Activated CD4-positive, alpha-beta T cell treated with anti-CD3 and anti-CD28 coated beads, Interleukin-2, amount 10 ng/mL, durations not matched to agents 24 days and 14 days (primary cell): ENCODE measurements at regions of chr13 and their contacts with region 1.

Region 1: GRCh38 chr13:46553886-46554858 is 1.2 kb downstream of the LRCH1 start:
- DNase-seq: peak; percentile 91
- H3K4me3 Mint-ChIP-seq: peak overlapping the region; percentile 97
- H3K27ac Mint-ChIP-seq: peak overlapping the region; percentile 90
- H3K4me1 Mint-ChIP-seq: peaks cover 45% of the 10 kb centered on the region
- H3K27me3 Mint-ChIP-seq: peaks cover 6% of the 10 kb centered on the region

Region 2: DNA sequence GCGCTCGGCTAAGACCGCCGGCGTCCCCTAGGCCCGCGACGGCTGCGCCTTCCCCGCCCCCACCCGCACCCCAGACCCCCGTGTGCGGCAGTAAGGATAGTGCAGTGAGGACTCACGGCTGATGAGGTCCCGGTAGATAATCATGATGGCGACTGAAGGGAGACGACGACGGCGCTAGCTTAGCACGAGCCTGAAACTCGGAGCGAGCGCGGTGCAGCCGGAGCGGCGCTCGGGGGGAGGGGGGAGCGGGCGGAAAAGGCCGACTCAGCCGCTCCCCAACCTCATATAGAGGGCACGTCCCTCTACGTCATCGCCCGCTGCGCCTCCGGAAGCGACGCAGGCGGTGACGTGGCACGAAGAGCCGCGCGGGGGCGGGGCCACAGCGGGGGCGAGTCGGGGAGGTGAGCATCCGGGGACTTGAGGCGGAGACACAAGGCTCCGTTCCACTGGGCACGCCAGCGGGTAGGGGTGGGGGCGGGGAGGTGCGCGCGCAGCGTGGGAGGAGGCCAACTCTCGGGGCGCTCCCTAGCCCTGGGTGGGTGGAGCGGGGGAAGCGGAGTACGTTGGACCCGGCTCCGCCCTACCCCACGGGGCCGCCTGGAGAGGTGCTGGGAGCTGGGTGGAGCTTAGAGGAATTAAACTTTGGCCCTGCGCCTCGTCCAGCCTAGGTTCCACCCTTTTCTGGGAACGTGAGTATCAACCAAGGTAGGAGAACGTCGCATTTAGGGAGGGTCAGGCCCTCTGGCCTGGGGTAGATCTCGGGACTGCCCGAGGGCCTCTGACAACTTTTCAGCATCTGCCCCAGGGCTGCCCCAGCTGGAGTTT is 1213.0 kb before region 1 on chr13 and contains the start of gene TPT1:
- intact Hi-C with region 1: loop called (anchors 10 kb)
- DNase-seq: peak; percentile 100
- H3K4me3 Mint-ChIP-seq: peak within 1 kb of the TSS; percentile 99
- H3K27ac Mint-ChIP-seq: peak within 1 kb of the TSS; percentile 99
- H3K4me1 Mint-ChIP-seq: peaks cover 45% of the 10 kb centered on the region
- H3K27me3 Mint-ChIP-seq: no peaks in the 10 kb centered on the region
- total RNA-seq, gene TPT1: 2,188 and 2,224 TPM in 2 replicates

Region 3: GRCh38 chr13:46184277-46184699 is 369.9 kb before region 1 on chr13:
- intact Hi-C with region 1: loop called (anchors 5 kb)
- DNase-seq: peak; percentile 92
- H3K4me3 Mint-ChIP-seq: peak overlapping the region; percentile 94
- H3K27ac Mint-ChIP-seq: peak overlapping the region; percentile 98
- H3K4me1 Mint-ChIP-seq: peaks cover 43% of the 10 kb centered on the region
- H3K27me3 Mint-ChIP-seq: peaks cover 1% of the 10 kb centered on the region

Region 4: GRCh38 chr13:46492946-46493345 is 61.2 kb before region 1 on chr13:
- intact Hi-C with region 1: loop called (anchors 5 kb)
- DNase-seq: peak; percentile 71
- H3K4me3 Mint-ChIP-seq: no peak overlapping the region
- H3K27ac Mint-ChIP-seq: no peak overlapping the region
- H3K4me1 Mint-ChIP-seq: peaks cover 3% of the 10 kb centered on the region
- H3K27me3 Mint-ChIP-seq: no peaks in the 10 kb centered on the region

Region 5: DNA sequence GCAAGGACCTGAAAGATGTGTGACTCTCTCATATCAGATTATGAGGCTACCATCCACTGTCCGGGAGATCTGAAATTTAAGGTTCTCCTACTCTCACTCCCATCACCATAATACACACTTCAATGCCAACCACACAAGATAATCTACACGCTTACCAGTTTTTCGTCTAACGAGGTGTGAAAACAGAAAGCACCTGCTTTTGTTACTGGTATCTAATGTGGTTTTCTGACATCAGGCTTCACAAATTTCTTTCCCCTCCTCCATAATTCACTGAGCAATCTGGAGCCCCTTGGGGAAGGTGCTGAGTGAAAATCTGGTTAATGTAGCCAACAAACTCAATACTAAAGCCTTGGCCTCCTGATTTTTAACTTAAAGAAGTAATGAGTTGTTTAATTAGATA is 11.3 kb before region 1 on chr13:
- intact Hi-C with region 1: no loop called
- DNase-seq: no peak
- H3K4me3 Mint-ChIP-seq: no peak overlapping the region
- H3K27ac Mint-ChIP-seq: no peak overlapping the region
- H3K4me1 Mint-ChIP-seq: peaks cover 9% of the 10 kb centered on the region
- H3K27me3 Mint-ChIP-seq: peaks cover 19% of the 10 kb centered on the region

Region 6: DNA sequence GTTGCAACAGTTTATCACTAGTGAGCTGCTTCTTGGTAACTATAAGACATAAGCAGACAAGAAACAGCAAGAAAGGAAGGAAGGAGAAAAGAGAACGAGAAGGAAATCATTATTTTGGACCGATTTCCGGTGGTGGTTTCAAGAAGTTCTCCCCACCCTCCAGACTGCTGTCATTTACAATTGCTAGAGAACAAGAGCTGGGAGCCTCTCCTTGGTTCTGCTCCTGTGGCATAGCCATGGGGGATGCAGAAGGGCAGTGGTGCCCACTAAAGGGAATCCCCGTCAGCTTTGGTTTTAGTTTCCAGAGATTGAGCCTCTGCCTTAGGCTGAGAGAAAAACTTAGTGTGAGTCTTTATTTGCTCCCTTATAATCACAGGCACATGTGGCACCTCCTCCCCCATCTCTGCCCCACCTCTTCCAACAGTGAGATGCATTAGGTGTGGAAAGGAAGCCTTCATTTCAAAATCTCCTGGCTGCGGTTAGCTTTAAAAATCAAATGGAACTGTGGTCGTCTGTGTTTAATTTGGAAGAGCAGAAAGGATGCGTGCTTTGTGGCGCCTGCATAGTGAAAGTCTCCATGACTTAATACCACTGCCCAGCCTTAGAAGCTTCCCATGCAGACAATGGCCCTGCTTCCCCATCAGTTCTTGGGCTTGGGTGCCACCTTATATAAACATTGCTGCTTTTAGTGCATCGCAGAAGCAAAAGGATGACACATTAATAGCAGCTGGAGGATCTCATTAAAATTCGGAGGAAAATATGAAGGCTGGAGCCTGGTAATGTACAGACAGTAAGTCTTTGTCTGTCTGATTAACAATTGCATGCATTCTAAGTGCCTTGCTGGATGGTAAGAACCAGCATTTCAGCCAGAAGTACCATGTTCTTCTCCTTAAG is 23.8 kb after region 1 on chr13:
- intact Hi-C with region 1: loop called (anchors 1 kb)
- DNase-seq: no peak
- H3K4me3 Mint-ChIP-seq: peak overlapping the region; percentile 45
- H3K27ac Mint-ChIP-seq: peak overlapping the region; percentile 65
- H3K4me1 Mint-ChIP-seq: peaks cover 46% of the 10 kb centered on the region
- H3K27me3 Mint-ChIP-seq: no peaks in the 10 kb centered on the region

Region 7: GRCh38 chr13:46668302-46668720 is 114.1 kb after region 1 on chr13:
- intact Hi-C with region 1: loop called (anchors 1 kb)
- DNase-seq: peak; percentile 77
- H3K4me3 Mint-ChIP-seq: peak overlapping the region; percentile 88
- H3K27ac Mint-ChIP-seq: peak overlapping the region; percentile 85
- H3K4me1 Mint-ChIP-seq: peaks cover 50% of the 10 kb centered on the region
- H3K27me3 Mint-ChIP-seq: no peaks in the 10 kb centered on the region

Region 8: GRCh38 chr13:46721054-46721453 is 166.9 kb after region 1 on chr13:
- intact Hi-C with region 1: loop called (anchors 1 kb)
- DNase-seq: peak; percentile 81
- H3K4me3 Mint-ChIP-seq: no peak overlapping the region
- H3K27ac Mint-ChIP-seq: no peak overlapping the region
- H3K4me1 Mint-ChIP-seq: peaks cover 7% of the 10 kb centered on the region
- H3K27me3 Mint-ChIP-seq: no peaks in the 10 kb centered on the region

Region 9: GRCh38 chr13:46775385-46776107 is 221.4 kb after region 1 on chr13:
- intact Hi-C with region 1: no loop called
- DNase-seq: no peak
- H3K4me3 Mint-ChIP-seq: no peak overlapping the region
- H3K27ac Mint-ChIP-seq: no peak overlapping the region
- H3K4me1 Mint-ChIP-seq: peaks cover 1% of the 10 kb centered on the region
- H3K27me3 Mint-ChIP-seq: no peaks in the 10 kb centered on the region

Region 10: DNA sequence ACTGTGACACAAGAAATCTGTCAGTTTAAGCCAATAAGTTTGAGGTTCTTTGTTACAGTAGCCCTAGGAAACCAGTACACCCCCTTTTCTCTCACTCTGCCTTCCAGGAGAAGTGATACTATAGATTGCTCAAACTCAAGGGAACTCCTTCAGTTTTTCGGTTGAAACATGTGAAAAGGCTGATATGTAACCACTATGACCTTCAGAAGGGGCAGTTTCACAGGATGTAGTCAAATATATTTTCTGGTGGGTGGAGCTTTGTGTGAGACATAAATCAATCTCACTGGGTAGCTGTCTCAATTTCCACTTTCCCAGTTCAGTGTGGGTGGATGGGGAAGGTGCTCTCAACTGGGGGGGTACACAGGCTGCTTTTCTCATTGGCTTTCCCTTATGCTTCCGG is 301.0 kb after region 1 on chr13:
- intact Hi-C with region 1: no loop called
- DNase-seq: no peak
- H3K4me3 Mint-ChIP-seq: no peak overlapping the region
- H3K27ac Mint-ChIP-seq: no peak overlapping the region
- H3K4me1 Mint-ChIP-seq: no peaks in the 10 kb centered on the region
- H3K27me3 Mint-ChIP-seq: peaks cover 12% of the 10 kb centered on the region